ENCODE measurements at regions of chr22 and their contacts with region 1.

Region 1: GRCh38 chr22:46317646-46318045 is 17.9 kb upstream of the TRMU start:
- DNase-seq: peak; percentile 23
- H3K4me3 ChIP-seq: no peak overlapping the region
- H3K27ac ChIP-seq: no peak overlapping the region
- H3K4me1 ChIP-seq: peaks cover 0 to 4% (median 0%) of the 10 kb centered on the region in 6 donors
- H3K27me3 ChIP-seq: no peaks in the 10 kb centered on the region
- CTCF ChIP-seq: no peak
- POLR2A ChIP-seq: no peak

Region 2: DNA sequence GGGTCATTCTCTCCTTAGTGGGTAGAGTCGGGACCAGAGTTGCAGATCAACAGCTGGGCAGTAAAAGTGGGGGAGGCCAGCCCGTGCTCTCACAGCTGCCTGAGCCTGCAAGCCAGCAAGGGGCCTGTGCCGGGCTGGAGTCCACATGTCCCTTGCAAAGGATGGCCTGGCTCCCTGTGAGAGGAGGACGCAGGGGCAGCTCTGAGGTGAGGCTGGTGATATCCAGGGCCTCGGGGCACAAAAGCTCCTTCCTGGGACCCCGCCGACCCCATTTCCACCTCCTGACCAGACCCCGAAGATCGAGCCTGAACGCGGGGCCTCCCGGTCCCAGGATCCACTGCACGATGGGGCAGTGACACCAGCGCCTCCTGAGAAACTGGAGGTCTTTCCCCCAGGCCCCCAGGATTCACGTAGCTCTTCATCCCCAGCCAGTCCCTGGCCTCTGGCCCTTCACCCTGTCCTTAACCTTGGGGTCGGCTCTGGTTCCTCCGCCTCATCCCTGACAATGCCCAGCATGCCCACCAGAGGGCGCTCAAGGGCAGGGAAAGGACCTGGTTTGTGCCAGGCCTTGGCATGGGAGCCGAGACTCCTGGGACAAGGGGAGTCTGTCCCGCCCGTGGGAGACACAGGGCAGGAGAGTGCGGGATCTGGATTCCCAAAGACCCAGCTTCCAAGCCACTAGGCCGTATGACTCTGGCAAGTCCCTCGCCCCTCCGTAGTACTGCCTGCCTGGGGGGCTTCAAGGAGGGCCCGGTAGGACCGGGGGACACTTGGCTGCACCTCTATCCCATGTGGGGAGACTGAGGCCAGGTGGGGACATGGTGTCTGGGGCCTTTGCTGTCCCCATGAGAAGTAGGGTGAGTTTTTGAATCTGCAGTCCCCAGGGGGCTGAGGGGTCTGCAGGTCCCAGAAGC is 322.9 kb before region 1 on chr22:
- intact Hi-C with region 1: loop called (anchors 5 kb)
- DNase-seq: peak; percentile 95
- H3K4me3 ChIP-seq: no peak overlapping the region
- H3K27ac ChIP-seq: peak overlapping the region in 1 of 8 donors; percentile 86
- H3K4me1 ChIP-seq: peaks cover 43 to 58% (median 52%) of the 10 kb centered on the region in 6 donors
- H3K27me3 ChIP-seq: no peaks in the 10 kb centered on the region
- CTCF ChIP-seq: peak; percentile 95 to 99 (median 98)
- POLR2A ChIP-seq: no peak

Region 3: GRCh38 chr22:46201059-46201757 is 116.4 kb before region 1 on chr22:
- intact Hi-C with region 1: no loop called
- DNase-seq: peak; percentile 18
- H3K4me3 ChIP-seq: no peak overlapping the region
- H3K27ac ChIP-seq: no peak overlapping the region
- H3K4me1 ChIP-seq: peaks cover 0 to 10% (median 0%) of the 10 kb centered on the region in 6 donors
- H3K27me3 ChIP-seq: no peaks in the 10 kb centered on the region
- CTCF ChIP-seq: no peak
- POLR2A ChIP-seq: no peak

Measured in spleen (tissue), 13 donors.